ENCODE measurements at regions of chr13 and their contacts with region 1.

Region 1: DNA sequence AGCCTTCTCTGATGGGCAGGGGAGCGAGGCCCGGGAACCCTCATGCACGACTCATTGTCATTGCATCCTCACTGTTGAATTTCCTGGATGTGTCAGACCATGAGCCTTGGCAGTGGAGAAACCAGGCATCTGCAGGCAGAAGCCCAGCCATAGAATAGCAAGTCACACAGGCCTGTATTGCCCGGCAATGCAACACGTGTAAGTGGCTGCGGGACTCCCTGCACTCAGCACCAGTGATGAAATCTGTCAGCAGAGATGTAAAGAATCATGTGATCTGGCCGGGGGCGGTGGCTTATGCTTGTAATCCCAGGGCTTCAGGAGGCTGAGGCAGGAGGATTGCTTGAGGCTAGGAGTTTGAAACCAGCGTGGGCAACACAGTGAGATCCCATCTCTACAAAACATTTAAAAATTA is 199.8 kb downstream of the KATNAL1 start:
- DNase-seq: no peak
- H3K4me3 ChIP-seq: no peak overlapping the region
- H3K27ac ChIP-seq: no peak overlapping the region
- H3K4me1 ChIP-seq: no peaks in the 10 kb centered on the region
- H3K27me3 ChIP-seq: no peaks in the 10 kb centered on the region
- CTCF ChIP-seq: no peak
- EP300 ChIP-seq: no peak
- POLR2A ChIP-seq: no peak

Region 2: GRCh38 chr13:29496240-29496712 is 611.3 kb before region 1 on chr13:
- intact Hi-C with region 1: loop called in 1 of 4 experiments (anchors 5 kb)
- DNase-seq: peak in 3 of 5 donors; percentile 37 to 57 (median 56)
- H3K4me3 ChIP-seq: no peak overlapping the region
- H3K27ac ChIP-seq: peak overlapping the region in 1 of 2 donors; percentile 69
- H3K4me1 ChIP-seq: peaks cover 15% of the 10 kb centered on the region
- H3K27me3 ChIP-seq: no peaks in the 10 kb centered on the region
- CTCF ChIP-seq: no peak
- EP300 ChIP-seq: no peak
- POLR2A ChIP-seq: no peak

Region 3: GRCh38 chr13:29763436-29764180 is 344.0 kb before region 1 on chr13:
- intact Hi-C with region 1: loop called in 2 of 4 experiments (anchors 5 to 10 kb)
- DNase-seq: no peak
- H3K4me3 ChIP-seq: no peak overlapping the region
- H3K27ac ChIP-seq: no peak overlapping the region
- H3K4me1 ChIP-seq: no peaks in the 10 kb centered on the region
- H3K27me3 ChIP-seq: no peaks in the 10 kb centered on the region
- CTCF ChIP-seq: no peak
- EP300 ChIP-seq: no peak
- POLR2A ChIP-seq: no peak

Measured in ovary (tissue), 10 donors.